AG04449 (cell line): ENCODE measurements at regions of chr15 and their contacts with region 1.

Region 1: GRCh38 chr15:59372352-59373211 is at the start of gene MYO1E:
- DNase-seq: peak; percentile 88
- H3K4me3 ChIP-seq: peak within 1 kb of the TSS; percentile 82
- CTCF ChIP-seq: no peak

Region 2: GRCh38 chr15:59299929-59300617 is 72.5 kb before region 1 on chr15:
- CTCF ChIA-PET with region 1: no interaction called
- POLR2A ChIA-PET with region 1: interaction called, 14 read pairs
- DNase-seq: peak; percentile 84
- H3K4me3 ChIP-seq: no peak overlapping the region
- CTCF ChIP-seq: no peak

Region 3: DNA sequence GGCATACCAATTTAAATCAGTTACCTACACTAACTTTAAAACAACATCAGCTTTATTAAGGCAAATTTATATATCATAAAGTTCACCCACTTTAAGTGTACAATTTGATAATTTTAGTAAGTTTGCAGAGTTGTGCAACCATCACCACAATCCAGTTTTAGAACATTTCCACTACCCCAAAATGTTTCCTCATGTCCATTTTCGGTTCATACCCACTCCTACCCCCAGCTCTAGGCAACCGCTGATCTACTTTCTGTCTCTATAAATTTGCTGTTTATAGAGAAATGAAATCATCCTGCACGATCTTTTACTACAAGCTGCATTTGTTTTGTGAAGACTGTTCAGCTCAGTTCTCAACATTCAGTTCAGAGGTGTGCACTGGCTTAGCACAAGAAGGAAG is 33.9 kb after region 1 on chr15:
- CTCF ChIA-PET with region 1: no interaction called
- POLR2A ChIA-PET with region 1: no interaction called
- DNase-seq: no peak
- H3K4me3 ChIP-seq: no peak overlapping the region
- CTCF ChIP-seq: no peak

Region 4: GRCh38 chr15:59457103-59457502 is 84.5 kb after region 1 on chr15:
- CTCF ChIA-PET with region 1: no interaction called
- POLR2A ChIA-PET with region 1: no interaction called
- DNase-seq: no peak
- H3K4me3 ChIP-seq: no peak overlapping the region
- CTCF ChIP-seq: no peak